AG04449 (cell line): ENCODE measurements at regions of chr2 and their contacts with region 1.

Region 1: DNA sequence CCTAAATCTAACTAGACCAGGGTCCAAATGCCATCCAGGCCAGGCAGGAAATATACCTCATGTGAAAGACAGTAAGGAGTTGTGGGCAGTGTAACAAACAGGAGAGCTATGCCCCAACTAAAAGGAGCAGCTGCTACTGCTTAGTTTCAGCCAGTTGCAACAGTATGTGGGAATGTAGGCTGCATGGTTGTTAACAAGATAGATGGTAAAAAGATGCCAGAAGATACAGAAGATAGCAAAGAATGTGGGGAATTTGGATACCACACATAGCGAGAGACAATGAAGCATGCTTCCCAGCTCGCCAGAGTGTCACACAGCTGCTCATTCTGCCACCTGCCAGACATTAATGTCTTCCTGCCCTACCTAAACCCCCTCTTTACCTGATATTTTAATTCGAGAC is 39.4 kb upstream of the CYBRD1 start:
- DNase-seq: peak; percentile 50
- H3K4me3 ChIP-seq: no peak overlapping the region
- CTCF ChIP-seq: no peak

Region 2: DNA sequence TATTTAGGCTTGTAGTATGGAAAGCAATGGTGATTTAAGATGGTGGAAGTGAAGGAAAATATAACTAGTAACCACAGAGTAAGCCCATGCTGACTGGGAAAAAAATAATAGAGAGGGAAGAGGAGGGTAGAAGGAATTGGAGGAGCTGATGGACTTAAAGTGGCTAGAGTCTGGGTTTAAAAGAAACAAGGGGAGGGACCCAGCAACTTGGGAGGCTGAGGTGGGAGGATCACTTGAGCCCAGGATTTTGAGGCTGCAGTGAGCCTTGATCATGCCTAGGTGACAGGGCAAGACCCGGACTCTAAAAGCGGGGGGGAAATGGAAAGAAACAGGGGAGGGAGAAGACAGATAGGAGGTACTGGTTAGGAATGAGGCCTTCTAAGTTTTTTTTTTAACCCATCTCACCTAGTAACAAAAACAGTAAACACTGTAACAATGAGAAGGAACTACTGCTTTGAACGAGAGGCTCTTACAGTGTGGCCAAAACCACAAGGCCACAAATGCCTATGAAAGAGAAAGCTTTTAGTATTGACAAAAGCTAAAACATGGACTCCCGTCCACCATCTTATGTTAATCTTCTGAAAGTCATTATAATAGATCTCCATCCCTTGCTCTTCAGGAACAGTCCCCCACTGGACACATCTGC is 75.7 kb before region 1 on chr2:
- CTCF ChIA-PET with region 1: no interaction called
- POLR2A ChIA-PET with region 1: no interaction called
- DNase-seq: no peak
- H3K4me3 ChIP-seq: no peak overlapping the region
- CTCF ChIP-seq: no peak

Region 3: GRCh38 chr2:171522052-171522787 is 39.3 kb after region 1 on chr2 and contains the start of gene CYBRD1:
- CTCF ChIA-PET with region 1: no interaction called
- POLR2A ChIA-PET with region 1: interaction called, 10 read pairs
- DNase-seq: no peak
- H3K4me3 ChIP-seq: peak within 1 kb of the TSS; percentile 87
- CTCF ChIP-seq: peak; percentile 1